Mammary epithelial cell (primary cell): ENCODE measurements at regions of chr15 and their contacts with region 1.

Region 1: DNA sequence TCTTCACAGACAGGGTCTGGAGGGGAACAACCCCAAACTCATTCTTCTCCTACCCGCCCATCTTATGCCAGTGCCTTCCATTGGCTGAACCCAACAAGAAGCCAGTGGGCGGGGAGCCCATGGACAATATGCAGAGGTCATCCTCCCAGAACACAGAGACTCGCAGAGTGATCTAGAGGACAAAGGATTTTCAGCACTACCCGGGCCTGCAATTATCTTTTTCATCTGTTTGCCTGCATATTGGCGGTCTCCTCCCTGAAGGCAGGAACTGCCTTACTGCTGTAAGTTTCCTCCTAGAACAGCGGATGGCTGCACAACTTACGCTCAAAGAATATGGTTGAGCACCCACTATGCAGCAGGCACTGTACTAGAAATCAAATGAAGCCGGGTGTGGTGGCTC is 8.7 kb upstream of the CYP1A2 start:
- DNase-seq: no peak
- H3K4me3 ChIP-seq: no peak overlapping the region
- H3K27ac ChIP-seq: no peak overlapping the region
- H3K4me1 ChIP-seq: no peaks in the 10 kb centered on the region
- H3K27me3 ChIP-seq: no peaks in the 10 kb centered on the region
- CTCF ChIP-seq: no peak

Region 2: GRCh38 chr15:74695597-74696397 is 44.1 kb before region 1 on chr15 and contains the start of gene EDC3:
- CTCF ChIA-PET with region 1: no interaction called
- dilution Hi-C with region 1: loop called (anchors 5 kb)
- in situ Hi-C with region 1: no loop called
- intact Hi-C with region 1: no loop called
- DNase-seq: peak; percentile 78
- H3K4me3 ChIP-seq: peak within 1 kb of the TSS; percentile 85 to 93 (median 89)
- H3K27ac ChIP-seq: peak within 1 kb of the TSS; percentile 67
- H3K4me1 ChIP-seq: peaks cover 17% of the 10 kb centered on the region
- H3K27me3 ChIP-seq: no peaks in the 10 kb centered on the region
- CTCF ChIP-seq: no peak
- total RNA-seq, gene EDC3: 10.2 to 37.0 TPM

Region 3: DNA sequence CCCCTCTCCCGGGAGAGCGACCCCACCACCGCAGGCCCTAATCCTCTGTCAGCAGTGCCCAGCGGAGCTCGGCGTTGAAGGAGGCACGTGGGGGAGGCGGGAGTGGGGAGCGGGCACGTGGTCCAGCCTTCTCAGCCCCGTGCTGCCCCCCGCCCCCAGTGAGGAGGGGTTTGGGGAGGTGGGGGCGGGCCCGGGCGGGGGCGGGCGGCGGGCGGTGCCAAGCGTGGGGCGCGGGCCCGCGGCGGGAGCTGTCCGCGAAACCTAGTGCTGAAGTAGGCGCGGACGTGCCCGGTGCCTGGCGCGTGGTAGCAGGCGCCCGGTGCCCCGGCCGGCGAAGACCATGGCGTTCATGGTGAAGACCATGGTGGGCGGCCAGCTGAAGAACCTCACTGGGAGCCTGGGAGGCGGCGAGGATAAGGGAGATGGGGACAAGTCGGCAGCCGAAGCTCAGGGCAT is 86.5 kb after region 1 on chr15 and contains the start of gene CPLX3:
- CTCF ChIA-PET with region 1: no interaction called
- dilution Hi-C with region 1: no loop called
- in situ Hi-C with region 1: no loop called
- intact Hi-C with region 1: no loop called
- DNase-seq: no peak
- H3K4me3 ChIP-seq: no peak within 1 kb of the TSS
- H3K27ac ChIP-seq: no peak within 1 kb of the TSS
- H3K4me1 ChIP-seq: no peaks in the 10 kb centered on the region
- H3K27me3 ChIP-seq: peaks cover 11% of the 10 kb centered on the region
- CTCF ChIP-seq: no peak
- total RNA-seq, gene CPLX3: not detected